MCF 10A (cell line): ENCODE measurements at regions of chr12 and their contacts with region 1.

Region 1: DNA sequence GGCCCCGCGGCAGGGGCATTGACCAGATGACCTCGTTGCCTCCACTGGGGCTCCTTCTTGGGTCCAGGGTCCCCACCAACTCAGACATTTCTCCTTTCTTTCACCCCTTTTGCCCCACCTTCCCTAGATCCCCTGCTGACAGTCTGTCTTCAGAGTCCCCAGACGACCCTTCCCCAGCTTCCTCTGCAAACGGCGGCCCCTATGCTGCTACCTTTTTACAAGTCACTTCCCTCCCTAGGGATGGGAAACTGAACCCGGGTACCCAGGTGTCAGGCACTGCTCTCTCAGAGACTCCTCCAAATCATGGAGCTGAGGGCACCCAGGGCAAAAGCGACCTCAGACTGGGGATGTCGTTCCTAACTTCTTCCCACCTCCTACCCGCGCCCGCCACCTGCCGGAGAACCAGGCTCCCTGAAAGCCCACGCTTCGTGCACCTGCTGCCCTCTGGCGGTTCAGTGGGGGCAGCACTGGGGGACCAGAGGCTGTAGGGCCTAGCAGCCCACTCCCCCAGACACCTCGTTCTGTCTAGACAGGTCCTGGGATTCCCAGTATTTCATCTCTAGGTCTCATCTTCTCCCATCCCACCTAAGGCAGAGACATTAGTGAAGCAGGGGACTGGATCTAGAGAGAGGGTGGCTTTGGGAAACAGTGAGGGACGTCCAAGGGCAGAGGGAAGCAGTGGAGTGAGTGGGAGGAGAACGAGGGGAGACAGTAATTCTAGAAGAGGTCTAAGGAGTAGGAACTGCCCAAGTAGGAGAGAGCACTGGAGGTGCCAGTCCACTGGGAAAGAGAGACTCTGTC is 4.9 kb downstream of the ZNF385A start:
- DNase-seq: peak; percentile 92
- H3K4me3 Mint-ChIP-seq: peak overlapping the region; percentile 74
- H3K27ac Mint-ChIP-seq: peak overlapping the region; percentile 49
- H3K4me1 Mint-ChIP-seq: peaks cover 37% of the 10 kb centered on the region
- H3K27me3 Mint-ChIP-seq: no peaks in the 10 kb centered on the region
- CTCF ChIP-seq: peak; percentile 99

Region 2: GRCh38 chr12:54220092-54220557 is 159.5 kb before region 1 on chr12:
- CTCF ChIA-PET with region 1: interaction called, 13 read pairs
- POLR2A ChIA-PET with region 1: no interaction called
- intact Hi-C with region 1: no loop called
- DNase-seq: peak; percentile 75
- H3K4me3 Mint-ChIP-seq: no peak overlapping the region
- H3K27ac Mint-ChIP-seq: no peak overlapping the region
- H3K4me1 Mint-ChIP-seq: peaks cover 18% of the 10 kb centered on the region
- H3K27me3 Mint-ChIP-seq: no peaks in the 10 kb centered on the region
- CTCF ChIP-seq: peak; percentile 78

Region 3: GRCh38 chr12:54324617-54325441 is 54.8 kb before region 1 on chr12 and contains the start of gene COPZ1:
- CTCF ChIA-PET with region 1: interaction called, 10 read pairs
- POLR2A ChIA-PET with region 1: no interaction called
- intact Hi-C with region 1: no loop called
- DNase-seq: peak; percentile 100
- H3K4me3 Mint-ChIP-seq: peak within 1 kb of the TSS; percentile 100
- H3K27ac Mint-ChIP-seq: peak within 1 kb of the TSS; percentile 100
- H3K4me1 Mint-ChIP-seq: peaks cover 19% of the 10 kb centered on the region
- H3K27me3 Mint-ChIP-seq: no peaks in the 10 kb centered on the region
- CTCF ChIP-seq: peak; percentile 77
- total RNA-seq, gene COPZ1: 207 and 299 TPM in 2 replicates

Region 4: DNA sequence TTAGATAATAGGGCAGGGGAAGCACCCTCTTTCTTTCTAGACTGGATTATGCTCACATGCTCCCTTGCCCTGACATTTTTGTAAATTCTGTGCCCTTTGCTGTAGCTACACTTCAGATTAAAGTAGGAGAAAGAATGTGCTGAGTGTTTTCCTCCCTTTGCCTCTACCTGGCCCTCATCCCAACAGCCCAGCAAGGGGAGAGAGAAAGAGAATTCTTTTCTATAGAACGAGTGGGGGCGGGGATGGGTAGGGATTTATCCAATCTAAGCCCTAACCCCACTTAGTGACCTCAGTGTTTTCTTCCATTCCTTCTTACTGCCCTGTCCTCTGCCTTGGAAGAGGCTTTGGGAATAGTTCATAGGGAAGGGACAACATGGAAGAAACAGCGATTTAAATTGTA is 28.9 kb before region 1 on chr12:
- CTCF ChIA-PET with region 1: no interaction called
- POLR2A ChIA-PET with region 1: no interaction called
- intact Hi-C with region 1: no loop called
- DNase-seq: no peak
- H3K4me3 Mint-ChIP-seq: no peak overlapping the region
- H3K27ac Mint-ChIP-seq: no peak overlapping the region
- H3K4me1 Mint-ChIP-seq: peaks cover 9% of the 10 kb centered on the region
- H3K27me3 Mint-ChIP-seq: no peaks in the 10 kb centered on the region
- CTCF ChIP-seq: no peak

Region 5: DNA sequence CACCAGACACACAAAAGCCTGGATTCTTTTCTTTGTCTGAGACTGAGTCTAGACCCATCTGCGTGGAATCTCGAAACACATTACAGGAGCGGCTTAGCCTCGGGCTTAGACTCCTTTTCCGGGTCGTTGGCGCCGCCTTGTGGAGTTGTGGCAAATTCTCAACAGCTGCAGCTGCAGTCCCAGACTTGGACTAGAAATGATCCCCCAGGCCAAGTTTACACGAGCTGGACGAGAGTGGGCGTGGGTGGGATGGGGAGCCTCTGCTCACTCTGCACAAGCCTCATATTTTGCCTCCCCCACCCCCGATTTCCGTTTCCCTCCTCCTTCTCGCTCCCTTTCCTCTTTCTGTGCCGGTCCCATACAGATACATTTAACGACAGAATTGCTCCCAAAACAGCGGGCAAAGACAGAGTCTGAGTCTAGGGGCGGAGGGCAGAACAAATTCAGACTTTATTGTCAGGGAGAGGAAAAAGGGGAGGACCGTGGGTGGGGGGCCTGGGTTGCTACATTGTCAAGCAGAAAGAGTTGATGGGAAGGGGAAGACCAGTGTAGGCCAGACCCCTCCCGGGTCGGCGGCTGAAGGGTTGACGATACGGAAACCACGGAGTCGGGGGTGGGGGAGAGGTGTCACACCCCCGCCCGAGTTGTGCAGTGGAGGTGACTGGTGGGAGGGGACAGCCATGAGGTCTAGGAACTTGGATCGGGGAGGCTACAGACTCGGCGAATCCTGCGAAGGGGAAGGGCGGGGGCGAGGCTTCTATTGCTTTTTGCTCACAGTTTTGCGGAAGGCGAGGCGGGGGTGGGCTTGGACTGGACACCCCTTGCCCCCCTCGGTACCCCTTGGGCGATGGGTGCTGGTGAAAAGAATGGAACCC is 10.7 kb before region 1 on chr12:
- CTCF ChIA-PET with region 1: interaction called, 109 read pairs
- POLR2A ChIA-PET with region 1: interaction called, 20 read pairs
- intact Hi-C with region 1: loop called (anchors 1 kb)
- DNase-seq: peak; percentile 90
- H3K4me3 Mint-ChIP-seq: peak overlapping the region; percentile 66
- H3K27ac Mint-ChIP-seq: no peak overlapping the region
- H3K4me1 Mint-ChIP-seq: peaks cover 35% of the 10 kb centered on the region
- H3K27me3 Mint-ChIP-seq: no peaks in the 10 kb centered on the region
- CTCF ChIP-seq: peak; percentile 71

Region 6: DNA sequence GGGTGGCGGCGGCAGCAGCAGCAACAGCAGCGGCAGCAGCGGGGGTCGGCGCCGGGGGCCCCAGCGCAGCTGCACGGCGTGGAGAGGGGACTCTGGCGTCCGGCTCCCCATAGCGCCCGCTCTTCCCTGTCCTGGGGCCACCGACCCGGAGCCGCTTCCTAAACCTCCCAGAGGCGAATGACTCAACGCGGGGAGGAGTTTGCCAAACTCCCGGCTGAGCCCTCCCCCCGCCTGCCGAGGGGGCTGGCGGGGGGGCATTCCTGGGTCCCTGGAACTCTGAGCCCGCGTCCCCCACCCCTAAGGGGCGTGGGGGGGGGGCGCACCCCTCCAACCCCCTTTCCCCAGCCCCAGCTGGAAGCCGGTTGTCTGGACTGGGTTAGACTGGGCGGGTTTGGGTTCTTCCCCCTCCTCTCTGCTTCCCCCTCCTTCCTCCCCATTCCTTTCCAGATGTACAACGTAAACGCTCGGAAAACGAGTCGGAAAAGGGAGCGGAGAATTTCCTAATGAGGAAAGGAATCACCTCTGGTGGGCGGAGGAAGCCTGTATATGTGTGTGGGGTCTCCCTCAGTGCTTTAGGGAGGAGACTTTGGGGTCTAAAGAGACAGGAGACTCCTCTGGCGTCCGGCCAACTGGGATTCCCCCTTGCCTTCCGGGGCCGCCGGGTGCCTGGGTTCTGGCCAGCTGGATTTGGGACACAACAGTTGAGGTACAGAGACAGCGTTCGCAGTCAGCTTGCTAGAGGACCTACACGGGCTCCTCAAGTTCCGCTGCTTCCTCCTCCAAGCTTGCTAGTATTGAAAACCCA is 39.7 kb after region 1 on chr12 and contains the start of gene ITGA5:
- CTCF ChIA-PET with region 1: interaction called, 13 read pairs
- POLR2A ChIA-PET with region 1: interaction called, 3 read pairs
- intact Hi-C with region 1: no loop called
- DNase-seq: peak; percentile 86
- H3K4me3 Mint-ChIP-seq: peak within 1 kb of the TSS; percentile 94
- H3K27ac Mint-ChIP-seq: peak within 1 kb of the TSS; percentile 93
- H3K4me1 Mint-ChIP-seq: peaks cover 55% of the 10 kb centered on the region
- H3K27me3 Mint-ChIP-seq: no peaks in the 10 kb centered on the region
- CTCF ChIP-seq: no peak
- total RNA-seq, gene ITGA5: 110 and 184 TPM in 2 replicates

Region 7: GRCh38 chr12:54448344-54448743 is 68.7 kb after region 1 on chr12:
- CTCF ChIA-PET with region 1: interaction called, 13 read pairs
- POLR2A ChIA-PET with region 1: no interaction called
- intact Hi-C with region 1: no loop called
- DNase-seq: no peak
- H3K4me3 Mint-ChIP-seq: no peak overlapping the region
- H3K27ac Mint-ChIP-seq: no peak overlapping the region
- H3K4me1 Mint-ChIP-seq: no peaks in the 10 kb centered on the region
- H3K27me3 Mint-ChIP-seq: no peaks in the 10 kb centered on the region
- CTCF ChIP-seq: no peak